ENCODE measurements at regions of chr11 and their contacts with region 1.

Region 1: DNA sequence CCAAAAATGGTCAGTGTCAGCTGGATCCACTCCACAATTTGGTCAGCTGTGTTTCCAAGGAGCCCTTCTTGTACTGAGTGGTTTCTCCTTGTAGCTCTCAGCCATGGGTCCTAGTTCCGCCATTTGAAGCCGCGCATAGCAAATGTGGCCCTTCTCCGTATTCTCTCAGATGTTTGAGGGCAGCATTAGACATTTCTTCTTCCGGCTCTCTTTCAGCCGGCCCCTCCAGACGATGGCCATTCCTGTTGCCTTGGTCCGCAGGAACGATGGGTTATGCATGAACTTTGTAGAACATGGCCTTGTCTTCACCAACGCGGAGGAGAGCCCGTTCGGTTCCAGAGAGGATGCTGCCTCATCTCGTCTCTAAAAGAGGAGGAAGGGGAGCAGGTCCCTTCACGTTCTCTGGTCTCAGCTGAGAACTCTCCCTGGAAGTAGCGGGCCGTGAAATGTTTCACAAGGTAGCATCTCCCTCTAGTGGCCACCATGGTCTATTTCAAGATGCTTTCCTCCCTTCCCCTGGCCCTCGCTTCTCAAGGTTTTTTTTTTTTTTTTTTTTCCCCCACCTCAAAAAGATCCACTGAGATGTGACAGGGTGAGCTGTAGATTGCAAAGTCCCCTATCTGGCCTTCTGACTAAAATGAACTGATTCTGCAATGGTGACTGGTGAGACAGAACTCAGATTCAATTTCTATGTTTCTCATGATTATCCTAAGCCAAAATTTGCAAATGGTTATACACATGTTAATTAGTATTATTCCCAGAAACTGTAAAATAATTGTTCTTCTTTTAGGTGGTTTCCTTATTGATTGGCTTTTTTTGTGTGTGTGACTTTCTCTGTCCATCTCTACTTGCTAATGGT is 19.8 kb upstream of the PLET1 start:
- DNase-seq: peak; percentile 70
- H3K4me3 Mint-ChIP-seq: peak overlapping the region; percentile 85
- H3K27ac Mint-ChIP-seq: peak overlapping the region; percentile 73
- H3K4me1 Mint-ChIP-seq: peaks cover 34% of the 10 kb centered on the region
- H3K27me3 Mint-ChIP-seq: no peaks in the 10 kb centered on the region

Region 2: DNA sequence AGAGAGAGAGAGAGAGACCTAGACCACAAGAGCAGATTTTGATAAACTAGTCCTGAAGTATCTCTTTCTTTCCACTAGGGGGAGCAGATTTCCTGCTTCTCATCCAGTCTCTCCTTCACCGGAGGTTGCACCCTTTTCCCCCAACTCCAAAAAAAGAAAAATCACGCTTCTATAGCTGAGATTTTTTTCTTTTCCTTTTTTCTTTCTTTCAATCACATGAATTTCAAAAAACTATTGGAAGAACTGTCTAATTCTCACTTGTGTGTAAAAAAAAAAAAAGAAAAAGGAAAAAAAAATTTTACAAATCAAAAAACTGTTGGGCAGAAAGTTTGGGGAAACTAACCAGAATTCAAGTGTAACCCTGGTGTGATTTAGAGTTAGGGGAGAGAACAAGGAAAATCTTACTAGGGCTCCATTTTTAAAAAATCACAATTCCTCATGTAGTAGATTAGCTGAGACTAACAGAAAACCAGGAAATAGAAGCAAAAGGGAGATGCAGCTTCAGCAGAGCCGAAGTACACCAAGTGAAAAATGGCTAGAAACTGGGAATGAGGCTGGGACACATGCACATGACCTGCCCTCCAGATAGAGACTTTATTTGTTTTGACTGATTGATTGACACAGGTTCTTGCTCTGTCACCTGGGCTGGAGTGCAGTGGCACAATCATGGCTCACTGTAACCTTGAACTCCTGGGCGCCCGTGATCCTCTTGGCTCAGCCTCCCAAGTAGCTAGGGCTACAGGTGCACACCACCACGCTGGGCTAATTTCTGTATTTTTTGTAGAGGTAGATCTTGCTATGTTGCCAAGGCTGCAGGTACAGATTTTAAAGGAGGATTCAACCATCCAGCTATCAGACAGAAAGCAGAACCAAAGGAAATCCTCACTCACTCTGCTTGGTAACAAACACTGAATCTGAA is 166.7 kb before region 1 on chr11:
- CTCF ChIA-PET with region 1: interaction called, 37 read pairs
- POLR2A ChIA-PET with region 1: no interaction called
- DNase-seq: no peak
- H3K4me3 Mint-ChIP-seq: no peak overlapping the region
- H3K27ac Mint-ChIP-seq: no peak overlapping the region
- H3K4me1 Mint-ChIP-seq: peaks cover 19% of the 10 kb centered on the region
- H3K27me3 Mint-ChIP-seq: no peaks in the 10 kb centered on the region

Region 3: DNA sequence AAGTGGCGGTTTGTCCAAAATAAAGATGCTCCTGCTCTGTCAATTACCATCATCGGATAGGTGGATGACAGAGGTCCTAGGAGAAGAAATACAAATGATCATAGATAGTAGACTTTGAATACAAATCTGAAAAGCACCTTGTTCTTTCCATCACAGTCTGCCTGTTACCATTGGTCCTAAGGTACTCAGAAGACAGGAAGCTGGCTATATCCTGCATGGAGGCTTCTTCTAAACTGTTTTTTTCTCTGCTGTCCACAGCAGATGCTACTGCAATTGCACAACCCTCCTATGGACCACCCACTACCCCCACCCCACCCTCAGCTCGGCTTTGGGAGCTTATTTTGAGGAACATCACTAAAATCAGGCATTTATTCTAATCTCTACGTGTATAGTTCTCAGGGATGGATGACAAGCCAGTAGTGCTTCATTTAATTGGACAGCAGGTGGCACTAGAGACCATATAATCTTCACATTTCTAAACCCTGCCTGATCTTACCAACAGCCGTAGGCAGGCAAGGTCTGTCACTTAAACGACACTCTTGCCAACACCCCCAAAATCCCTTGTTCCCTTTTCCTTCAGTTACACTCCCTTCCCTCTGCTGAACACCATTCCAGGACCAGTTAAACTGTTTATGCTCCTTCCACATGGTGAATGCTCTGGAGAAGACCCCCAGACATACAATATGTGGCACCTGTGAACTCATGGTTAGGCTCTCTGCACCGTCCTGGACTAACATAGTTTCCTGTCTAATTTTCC is 60.8 kb before region 1 on chr11:
- CTCF ChIA-PET with region 1: interaction called, 219 read pairs
- POLR2A ChIA-PET with region 1: interaction called, 8 read pairs
- DNase-seq: peak; percentile 38
- H3K4me3 Mint-ChIP-seq: no peak overlapping the region
- H3K27ac Mint-ChIP-seq: no peak overlapping the region
- H3K4me1 Mint-ChIP-seq: peaks cover 8% of the 10 kb centered on the region
- H3K27me3 Mint-ChIP-seq: no peaks in the 10 kb centered on the region

Region 4: GRCh38 chr11:112265721-112266409 is 14.6 kb before region 1 on chr11:
- CTCF ChIA-PET with region 1: interaction called, 13 read pairs
- POLR2A ChIA-PET with region 1: no interaction called
- DNase-seq: no peak
- H3K4me3 Mint-ChIP-seq: no peak overlapping the region
- H3K27ac Mint-ChIP-seq: no peak overlapping the region
- H3K4me1 Mint-ChIP-seq: no peaks in the 10 kb centered on the region
- H3K27me3 Mint-ChIP-seq: no peaks in the 10 kb centered on the region

Region 5: GRCh38 chr11:112334381-112334780 is 53.9 kb after region 1 on chr11:
- CTCF ChIA-PET with region 1: no interaction called
- POLR2A ChIA-PET with region 1: no interaction called
- DNase-seq: no peak
- H3K4me3 Mint-ChIP-seq: no peak overlapping the region
- H3K27ac Mint-ChIP-seq: no peak overlapping the region
- H3K4me1 Mint-ChIP-seq: no peaks in the 10 kb centered on the region
- H3K27me3 Mint-ChIP-seq: peaks cover 1% of the 10 kb centered on the region

Region 6: GRCh38 chr11:112511271-112511670 is 230.8 kb after region 1 on chr11:
- CTCF ChIA-PET with region 1: no interaction called
- POLR2A ChIA-PET with region 1: no interaction called
- DNase-seq: no peak
- H3K4me3 Mint-ChIP-seq: no peak overlapping the region
- H3K27ac Mint-ChIP-seq: no peak overlapping the region
- H3K4me1 Mint-ChIP-seq: no peaks in the 10 kb centered on the region
- H3K27me3 Mint-ChIP-seq: peaks cover 15% of the 10 kb centered on the region

Region 7: DNA sequence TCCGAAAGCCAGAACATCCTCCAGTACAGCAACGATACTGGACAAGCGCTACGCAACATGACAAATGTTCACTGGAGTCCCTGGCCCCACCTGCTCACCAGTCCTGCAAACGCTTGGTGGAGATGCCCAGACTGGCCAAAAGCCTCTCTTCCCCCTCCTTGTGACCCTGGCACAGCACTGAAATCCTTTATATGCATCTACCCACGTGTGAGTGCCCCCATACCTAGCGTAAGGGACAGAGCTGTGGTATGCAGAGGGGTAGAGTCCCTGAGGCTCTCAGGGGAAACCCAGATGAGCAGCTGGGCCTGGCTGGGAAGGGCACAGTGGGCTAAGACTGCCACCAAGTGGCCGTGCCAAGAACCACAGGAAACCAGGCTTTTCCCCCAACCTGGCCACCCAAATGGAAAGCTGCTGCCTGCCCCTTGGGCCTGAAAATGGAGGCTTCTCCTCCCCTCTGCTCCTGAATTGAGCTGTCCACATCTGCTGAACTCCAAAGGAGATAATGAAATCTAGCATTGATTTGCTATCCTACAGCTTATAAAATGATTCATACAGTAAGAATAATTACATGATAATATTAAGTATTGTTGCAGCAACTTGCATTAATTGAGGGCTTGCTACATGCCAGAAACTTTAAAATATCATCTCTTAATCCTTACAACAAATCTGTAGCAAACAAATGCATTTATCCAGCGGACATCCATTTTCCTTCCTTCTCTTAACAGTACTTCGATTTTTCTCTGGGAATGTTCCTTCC is 1009.1 kb after region 1 on chr11:
- CTCF ChIA-PET with region 1: interaction called, 25 read pairs
- POLR2A ChIA-PET with region 1: no interaction called
- DNase-seq: peak; percentile 70
- H3K4me3 Mint-ChIP-seq: no peak overlapping the region
- H3K27ac Mint-ChIP-seq: no peak overlapping the region
- H3K4me1 Mint-ChIP-seq: no peaks in the 10 kb centered on the region
- H3K27me3 Mint-ChIP-seq: peaks cover 3% of the 10 kb centered on the region